ENCODE measurements at regions of chr5 and their contacts with region 1.

Region 1: DNA sequence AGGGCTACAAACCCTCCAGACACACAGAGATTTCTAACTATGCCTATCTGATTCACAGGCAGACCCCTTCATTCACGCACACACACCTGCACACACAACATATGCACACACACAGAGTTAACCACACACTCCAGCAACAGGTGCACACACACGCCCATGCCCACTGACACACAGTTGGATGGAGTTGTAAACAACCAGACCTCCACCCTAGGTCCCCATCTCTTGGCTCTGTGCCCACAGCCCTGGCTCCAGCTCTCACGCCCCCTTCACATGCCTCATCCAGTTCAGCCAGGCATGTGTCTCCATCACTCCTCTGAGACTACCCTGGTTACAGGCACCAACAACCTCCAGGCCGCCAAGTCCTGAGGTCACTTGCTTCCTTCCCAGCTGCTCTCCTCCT is 61.1 kb downstream of the PSD2 start:
- DNase-seq: no peak
- ATAC-seq: no peak
- H3K4me3 ChIP-seq: no peak overlapping the region
- H3K27ac ChIP-seq: no peak overlapping the region
- H3K4me1 ChIP-seq: no peaks in the 10 kb centered on the region
- H3K27me3 ChIP-seq: no peaks in the 10 kb centered on the region
- CTCF ChIP-seq: no peak

Region 2: GRCh38 chr5:138789771-138790242 is 1066.9 kb before region 1 on chr5:
- CTCF ChIA-PET with region 1: no interaction called
- POLR2A ChIA-PET with region 1: no interaction called
- in situ Hi-C with region 1: no loop called
- intact Hi-C with region 1: no loop called
- DNase-seq: peak; percentile 17
- ATAC-seq: peak; percentile 83
- H3K4me3 ChIP-seq: no peak overlapping the region
- H3K27ac ChIP-seq: no peak overlapping the region
- H3K4me1 ChIP-seq: no peaks in the 10 kb centered on the region
- H3K27me3 ChIP-seq: no peaks in the 10 kb centered on the region
- CTCF ChIP-seq: peak; percentile 79

Region 3: GRCh38 chr5:139774980-139775661 is 81.6 kb before region 1 on chr5:
- CTCF ChIA-PET with region 1: interaction called, 10 read pairs
- POLR2A ChIA-PET with region 1: no interaction called
- in situ Hi-C with region 1: no loop called
- intact Hi-C with region 1: no loop called
- DNase-seq: no peak
- ATAC-seq: peak; percentile 93
- H3K4me3 ChIP-seq: no peak overlapping the region
- H3K27ac ChIP-seq: no peak overlapping the region
- H3K4me1 ChIP-seq: no peaks in the 10 kb centered on the region
- H3K27me3 ChIP-seq: 0 out of 2 replicates have a peak, but pooled peaks cover 2% of the 10 kb centered on the region
- CTCF ChIP-seq: peak; percentile 98

Region 4: DNA sequence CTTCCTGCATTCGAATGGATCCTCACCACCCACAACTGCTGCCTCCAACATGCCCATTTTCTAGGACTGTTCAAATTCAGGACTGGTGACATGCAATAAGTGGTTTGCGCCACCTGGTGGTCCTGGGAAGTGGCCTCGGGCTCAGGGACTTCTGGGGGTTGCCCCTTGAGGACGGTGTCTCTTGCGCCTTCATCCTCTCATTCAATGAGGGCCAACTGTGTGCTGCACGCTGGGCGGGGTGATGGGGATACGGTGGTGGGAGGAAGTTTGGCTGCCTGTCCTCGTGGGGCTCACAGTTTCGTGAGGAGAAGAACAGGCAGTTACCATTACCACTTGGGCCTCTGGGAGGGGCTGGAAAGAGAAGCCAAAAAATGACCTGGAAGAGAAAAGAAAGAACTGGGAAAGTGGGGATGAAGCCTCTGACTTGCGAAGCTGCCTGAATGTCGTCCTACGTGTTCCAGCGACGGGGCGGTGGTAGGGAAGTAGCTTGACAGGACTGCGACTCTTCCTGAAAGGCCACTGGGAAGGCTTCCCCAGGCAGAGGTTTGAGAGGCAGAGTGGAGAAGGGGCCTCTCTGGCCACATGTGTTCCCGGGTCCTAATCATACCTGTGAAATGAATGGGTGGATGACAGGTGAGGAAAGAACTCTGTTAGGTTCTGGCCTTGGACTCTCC is 12.1 kb before region 1 on chr5:
- CTCF ChIA-PET with region 1: no interaction called
- POLR2A ChIA-PET with region 1: no interaction called
- in situ Hi-C with region 1: no loop called
- intact Hi-C with region 1: no loop called
- DNase-seq: peak; percentile 39
- ATAC-seq: peak; percentile 89
- H3K4me3 ChIP-seq: no peak overlapping the region
- H3K27ac ChIP-seq: no peak overlapping the region
- H3K4me1 ChIP-seq: no peaks in the 10 kb centered on the region
- H3K27me3 ChIP-seq: no peaks in the 10 kb centered on the region
- CTCF ChIP-seq: peak; percentile 94

Region 5: GRCh38 chr5:139903795-139904565 is 47.3 kb after region 1 on chr5:
- CTCF ChIA-PET with region 1: no interaction called
- POLR2A ChIA-PET with region 1: no interaction called
- in situ Hi-C with region 1: no loop called
- intact Hi-C with region 1: no loop called
- DNase-seq: no peak
- ATAC-seq: peak; percentile 69
- H3K4me3 ChIP-seq: peak overlapping the region; percentile 34 to 37
- H3K27ac ChIP-seq: no peak overlapping the region
- H3K4me1 ChIP-seq: peaks cover 10% of the 10 kb centered on the region
- H3K27me3 ChIP-seq: no peaks in the 10 kb centered on the region
- CTCF ChIP-seq: no peak

Region 6: GRCh38 chr5:139968547-139969261 is 112.0 kb after region 1 on chr5:
- CTCF ChIA-PET with region 1: interaction called, 4 read pairs
- POLR2A ChIA-PET with region 1: no interaction called
- in situ Hi-C with region 1: no loop called
- intact Hi-C with region 1: loop called (anchors 5 kb)
- DNase-seq: peak; percentile 72
- ATAC-seq: peak; percentile 97
- H3K4me3 ChIP-seq: no peak overlapping the region
- H3K27ac ChIP-seq: no peak overlapping the region
- H3K4me1 ChIP-seq: peaks cover 11% of the 10 kb centered on the region
- H3K27me3 ChIP-seq: no peaks in the 10 kb centered on the region
- CTCF ChIP-seq: peak; percentile 99

Region 7: GRCh38 chr5:140084541-140084940 is 227.8 kb after region 1 on chr5:
- CTCF ChIA-PET with region 1: no interaction called
- POLR2A ChIA-PET with region 1: interaction called, 10 read pairs
- in situ Hi-C with region 1: no loop called
- intact Hi-C with region 1: no loop called
- DNase-seq: no peak
- ATAC-seq: no peak
- H3K4me3 ChIP-seq: no peak overlapping the region
- H3K27ac ChIP-seq: no peak overlapping the region
- H3K4me1 ChIP-seq: no peaks in the 10 kb centered on the region
- H3K27me3 ChIP-seq: peaks cover 5% of the 10 kb centered on the region; the same call in 1 of the 2 replicates
- CTCF ChIP-seq: no peak